ENCODE measurements at regions of chr4 and their contacts with region 1.

Region 1: GRCh38 chr4:47562297-47562696 is 77.2 kb downstream of the ATP10D start:
- DNase-seq: no peak
- ATAC-seq: no peak
- H3K4me3 ChIP-seq: no peak overlapping the region
- H3K27ac ChIP-seq: no peak overlapping the region
- H3K4me1 ChIP-seq: peaks cover 0 to 8% (median 0%) of the 10 kb centered on the region in 9 donors
- H3K27me3 ChIP-seq: no peaks in the 10 kb centered on the region
- CTCF ChIP-seq: no peak

Region 2: DNA sequence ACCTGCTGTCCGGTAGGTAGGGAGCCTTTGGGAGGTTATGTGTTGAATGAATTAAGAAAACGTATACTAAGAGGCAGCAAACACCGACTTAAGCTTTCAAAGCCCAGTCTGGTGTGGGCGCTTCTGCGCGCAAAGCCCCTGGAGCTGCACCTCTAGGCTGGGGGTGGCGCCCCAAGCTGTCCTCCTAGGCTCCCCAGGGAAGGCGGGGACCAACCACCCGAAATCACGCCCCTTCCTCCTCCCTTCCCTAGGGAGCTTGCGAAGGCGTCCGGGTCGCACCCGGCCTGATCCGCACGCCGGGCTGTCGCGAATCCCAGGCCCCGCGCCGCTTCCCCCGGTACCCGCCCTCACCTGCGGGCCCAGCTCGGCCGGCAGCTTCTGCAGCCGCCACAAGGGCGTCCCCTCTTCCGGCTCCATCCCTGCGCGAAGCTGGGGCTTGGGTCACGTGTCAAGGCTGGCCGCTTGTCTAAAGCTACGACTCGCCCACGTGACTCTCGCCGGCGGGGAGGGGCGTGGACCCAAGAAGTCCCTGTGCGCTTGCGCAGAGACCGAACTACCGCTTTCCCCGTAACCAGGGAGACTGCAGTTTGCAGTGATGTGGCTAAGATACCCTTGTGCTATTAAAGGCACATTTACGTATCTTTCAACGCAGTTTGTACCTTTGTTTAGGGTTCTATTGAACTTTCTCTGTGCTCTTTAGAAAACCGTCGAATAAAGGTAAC is 98.9 kb before region 1 on chr4 and contains the start of gene COMMD8:
- intact Hi-C with region 1: loop called in 4 of 10 experiments (anchors 1 to 10 kb)
- DNase-seq: peak; percentile 96 to 97
- ATAC-seq: peak; percentile 99 to 100 (median 99)
- H3K4me3 ChIP-seq: peak within 1 kb of the TSS; percentile 60 to 92 (median 86)
- H3K27ac ChIP-seq: peak within 1 kb of the TSS; percentile 32 to 95 (median 88)
- H3K4me1 ChIP-seq: peaks cover 0 to 29% (median 16%) of the 10 kb centered on the region in 9 donors
- H3K27me3 ChIP-seq: no peaks in the 10 kb centered on the region
- CTCF ChIP-seq: peak in 7 of 9 donors; percentile 10 to 57 (median 43)
- total RNA-seq, gene COMMD8: 11.5 to 22.2 (median 15.2) TPM

Region 3: GRCh38 chr4:47485047-47485692 is 77.1 kb before region 1 on chr4 and contains the start of gene ATP10D:
- intact Hi-C with region 1: loop called in 6 of 10 experiments (anchors 5 to 10 kb)
- DNase-seq: peak; percentile 96 to 98
- ATAC-seq: peak; percentile 99 to 100 (median 100)
- H3K4me3 ChIP-seq: peak within 1 kb of the TSS; percentile 46 to 77 (median 66)
- H3K27ac ChIP-seq: peak within 1 kb of the TSS; percentile 83 to 95 (median 90)
- H3K4me1 ChIP-seq: peaks cover 0 to 50% (median 27%) of the 10 kb centered on the region in 9 donors
- H3K27me3 ChIP-seq: no peaks in the 10 kb centered on the region
- CTCF ChIP-seq: peak in 6 of 9 donors; percentile 21 to 58 (median 36)
- total RNA-seq, gene ATP10D: 7.7 to 15.7 (median 8.9) TPM

Region 4: DNA sequence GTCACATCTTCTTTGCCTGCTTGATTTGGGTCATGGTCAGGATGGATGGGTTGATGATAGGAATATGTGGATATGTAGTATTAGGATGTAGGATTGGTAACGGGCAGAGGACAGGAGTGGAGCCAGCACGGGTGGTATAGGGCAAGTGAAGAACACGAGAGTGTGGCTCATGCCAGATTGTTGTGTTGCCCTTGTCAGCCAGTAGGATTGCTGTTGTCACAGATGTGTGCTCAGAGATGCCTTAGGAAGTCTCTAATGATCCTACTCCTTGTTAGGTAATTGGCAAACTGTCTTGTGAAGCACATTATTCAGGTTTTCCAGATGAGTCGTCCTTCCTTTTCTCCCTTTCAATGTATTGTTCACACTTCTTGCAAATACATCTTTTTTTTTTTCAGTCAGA is 71.7 kb before region 1 on chr4:
- intact Hi-C with region 1: loop called in 6 of 10 experiments (anchors 5 to 10 kb)
- DNase-seq: peak in 1 of 2 donors; percentile 13
- ATAC-seq: peak; percentile 43 to 81 (median 72)
- H3K4me3 ChIP-seq: no peak overlapping the region
- H3K27ac ChIP-seq: no peak overlapping the region
- H3K4me1 ChIP-seq: peaks cover 0 to 58% (median 30%) of the 10 kb centered on the region in 9 donors
- H3K27me3 ChIP-seq: no peaks in the 10 kb centered on the region
- CTCF ChIP-seq: peak in 7 of 9 donors; percentile 44 to 63 (median 48)

Region 5: DNA sequence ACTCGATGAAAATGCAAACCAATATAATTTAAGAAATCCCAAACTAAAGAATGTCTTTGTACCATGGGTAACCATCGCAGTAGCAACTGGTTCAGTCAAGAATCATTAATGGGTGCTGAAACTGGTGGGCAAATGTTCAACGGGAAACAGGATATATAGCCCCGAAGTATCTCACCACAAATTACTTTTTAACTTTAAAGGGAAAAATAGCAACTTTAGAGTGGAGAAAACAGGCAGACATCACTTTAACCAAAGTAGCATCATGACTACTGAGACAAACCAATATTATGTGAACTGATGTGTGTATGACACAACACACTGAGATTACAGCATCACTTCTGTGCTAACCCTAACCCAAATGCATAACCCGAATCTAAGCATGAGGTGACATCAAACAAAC is 745.2 kb after region 1 on chr4:
- intact Hi-C with region 1: no loop called
- DNase-seq: no peak
- ATAC-seq: no peak
- H3K4me3 ChIP-seq: no peak overlapping the region
- H3K27ac ChIP-seq: no peak overlapping the region
- H3K4me1 ChIP-seq: no peaks in the 10 kb centered on the region
- H3K27me3 ChIP-seq: no peaks in the 10 kb centered on the region
- CTCF ChIP-seq: no peak

Measured in heart right ventricle (tissue), 16 donors.